ENCODE measurements at regions of chr9 and their contacts with region 1.

Region 1: GRCh38 chr9:113957821-113958341 is 81.8 kb downstream of the ZNF618 start:
- DNase-seq: no peak
- H3K4me3 ChIP-seq: peak overlapping the region in 1 of 2 donors; percentile 0
- H3K27ac ChIP-seq: peak overlapping the region; percentile 77 to 91
- H3K4me1 ChIP-seq: peaks cover 9 to 42% of the 10 kb centered on the region in 2 donors
- H3K27me3 ChIP-seq: no peaks in the 10 kb centered on the region
- CTCF ChIP-seq: no peak

Region 2: DNA sequence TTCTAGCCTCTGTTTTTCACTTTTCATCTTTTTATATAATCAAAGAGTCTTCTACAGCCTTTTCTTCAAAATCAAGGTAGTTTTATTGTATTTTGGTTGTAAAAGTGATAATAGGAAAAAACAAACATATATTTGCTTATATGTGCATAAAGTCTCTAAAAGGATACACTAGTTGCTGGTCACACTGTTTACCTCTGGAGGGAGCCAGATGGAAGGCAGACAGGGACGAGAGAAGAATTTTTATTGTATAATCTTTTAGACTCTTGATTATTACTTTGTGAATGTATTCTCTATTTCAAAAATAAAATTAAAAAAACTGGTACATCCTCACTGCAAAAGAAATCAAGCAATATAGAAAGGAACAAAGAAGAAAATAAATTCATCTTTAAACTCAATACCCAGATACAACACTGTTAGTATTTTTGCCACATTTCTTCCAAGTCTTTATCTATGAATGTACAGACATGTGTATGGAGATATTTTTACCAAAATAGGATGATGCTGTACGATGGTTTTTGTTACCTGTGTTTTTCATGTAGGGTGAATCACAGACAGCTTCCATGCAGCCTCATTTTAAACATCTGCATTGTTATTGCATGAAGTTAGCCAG is 648.6 kb before region 1 on chr9:
- intact Hi-C with region 1: no loop called
- DNase-seq: no peak
- H3K4me3 ChIP-seq: no peak overlapping the region
- H3K27ac ChIP-seq: no peak overlapping the region
- H3K4me1 ChIP-seq: no peaks in the 10 kb centered on the region
- H3K27me3 ChIP-seq: no peaks in the 10 kb centered on the region
- CTCF ChIP-seq: peak in 2 of 3 experiments; percentile 40 to 54

Region 3: DNA sequence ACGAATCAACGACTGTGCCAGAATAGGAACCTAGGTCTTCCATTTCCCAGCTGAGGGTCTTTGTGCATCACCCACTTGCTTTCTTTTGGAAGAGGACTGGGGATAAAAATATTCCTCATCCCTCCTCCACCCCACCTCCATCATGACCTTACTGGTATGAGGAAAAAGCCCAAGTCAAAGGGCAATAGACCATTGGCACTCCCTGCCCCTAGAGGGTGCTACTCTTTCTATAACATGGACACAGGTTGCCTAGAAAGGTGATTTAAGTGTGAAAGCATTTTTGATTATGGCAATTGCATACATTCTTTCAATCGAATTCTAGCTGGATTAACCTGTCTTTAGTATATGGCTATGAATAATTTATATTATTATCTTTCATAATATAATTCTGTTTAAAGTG is 104.6 kb before region 1 on chr9:
- intact Hi-C with region 1: no loop called
- DNase-seq: no peak
- H3K4me3 ChIP-seq: no peak overlapping the region
- H3K27ac ChIP-seq: no peak overlapping the region
- H3K4me1 ChIP-seq: no peaks in the 10 kb centered on the region
- H3K27me3 ChIP-seq: no peaks in the 10 kb centered on the region
- CTCF ChIP-seq: peak in 1 of 3 experiments; percentile 27

Region 4: GRCh38 chr9:113919382-113919781 is 38.5 kb before region 1 on chr9:
- intact Hi-C with region 1: loop called (anchors 5 kb)
- DNase-seq: no peak
- H3K4me3 ChIP-seq: peak overlapping the region; percentile 4 to 42
- H3K27ac ChIP-seq: peak overlapping the region; percentile 63 to 72
- H3K4me1 ChIP-seq: peaks cover 7 to 13% of the 10 kb centered on the region in 2 donors
- H3K27me3 ChIP-seq: no peaks in the 10 kb centered on the region
- CTCF ChIP-seq: no peak

Region 5: GRCh38 chr9:113929634-113930389 is 28.1 kb before region 1 on chr9:
- intact Hi-C with region 1: loop called (anchors 1 kb)
- DNase-seq: no peak
- H3K4me3 ChIP-seq: no peak overlapping the region
- H3K27ac ChIP-seq: peak overlapping the region; percentile 70 to 77
- H3K4me1 ChIP-seq: peaks cover 5 to 34% of the 10 kb centered on the region in 2 donors
- H3K27me3 ChIP-seq: no peaks in the 10 kb centered on the region
- CTCF ChIP-seq: no peak

Region 6: GRCh38 chr9:113940077-113940476 is 17.8 kb before region 1 on chr9:
- intact Hi-C with region 1: no loop called
- DNase-seq: no peak
- H3K4me3 ChIP-seq: no peak overlapping the region
- H3K27ac ChIP-seq: no peak overlapping the region
- H3K4me1 ChIP-seq: peaks cover 0 to 2% of the 10 kb centered on the region in 2 donors
- H3K27me3 ChIP-seq: no peaks in the 10 kb centered on the region
- CTCF ChIP-seq: no peak

Region 7: DNA sequence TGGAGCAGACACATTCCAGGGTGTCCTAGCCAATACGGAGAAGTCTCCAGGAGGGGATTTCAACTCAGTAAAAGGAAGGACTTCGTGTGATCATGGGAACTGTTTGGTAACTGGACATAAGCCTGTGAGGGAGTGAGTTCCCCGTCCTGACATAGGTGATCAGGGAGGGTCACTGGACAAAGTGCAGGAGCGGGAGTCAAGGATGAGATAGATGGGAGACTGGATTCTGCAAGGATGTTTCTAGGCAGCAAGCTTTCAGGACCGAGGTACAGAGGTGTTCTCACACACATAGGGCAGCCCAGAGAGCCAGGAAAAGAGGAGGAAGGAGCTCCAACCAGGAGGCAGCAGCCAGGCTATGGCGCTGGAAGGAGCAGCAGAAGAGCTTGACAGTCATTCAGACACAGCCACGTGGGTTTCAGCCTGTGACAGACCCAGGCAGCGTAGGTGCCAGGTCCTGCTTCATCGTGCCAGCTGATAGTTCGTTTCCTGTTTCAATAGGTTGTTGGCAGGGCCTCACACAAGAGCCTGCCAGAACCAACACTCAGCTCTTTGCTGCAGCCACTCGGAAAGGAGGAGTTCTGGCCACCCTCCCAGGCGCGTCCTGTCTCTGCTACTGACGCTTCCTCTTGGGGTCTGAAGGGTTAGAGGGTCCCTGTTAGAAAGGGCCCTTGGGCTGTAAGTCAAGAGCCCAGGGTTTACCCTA is 36.1 kb after region 1 on chr9:
- intact Hi-C with region 1: loop called (anchors 1 kb)
- DNase-seq: peak; percentile 69 to 96
- H3K4me3 ChIP-seq: peak overlapping the region in 1 of 2 donors; percentile 32
- H3K27ac ChIP-seq: peak overlapping the region; percentile 50 to 67
- H3K4me1 ChIP-seq: peaks cover 34 to 53% of the 10 kb centered on the region in 2 donors
- H3K27me3 ChIP-seq: no peaks in the 10 kb centered on the region
- CTCF ChIP-seq: no peak

Measured in ascending aorta (tissue), 2 donors.